ENCODE measurements at regions of chr1 and their contacts with region 1.

Region 1: DNA sequence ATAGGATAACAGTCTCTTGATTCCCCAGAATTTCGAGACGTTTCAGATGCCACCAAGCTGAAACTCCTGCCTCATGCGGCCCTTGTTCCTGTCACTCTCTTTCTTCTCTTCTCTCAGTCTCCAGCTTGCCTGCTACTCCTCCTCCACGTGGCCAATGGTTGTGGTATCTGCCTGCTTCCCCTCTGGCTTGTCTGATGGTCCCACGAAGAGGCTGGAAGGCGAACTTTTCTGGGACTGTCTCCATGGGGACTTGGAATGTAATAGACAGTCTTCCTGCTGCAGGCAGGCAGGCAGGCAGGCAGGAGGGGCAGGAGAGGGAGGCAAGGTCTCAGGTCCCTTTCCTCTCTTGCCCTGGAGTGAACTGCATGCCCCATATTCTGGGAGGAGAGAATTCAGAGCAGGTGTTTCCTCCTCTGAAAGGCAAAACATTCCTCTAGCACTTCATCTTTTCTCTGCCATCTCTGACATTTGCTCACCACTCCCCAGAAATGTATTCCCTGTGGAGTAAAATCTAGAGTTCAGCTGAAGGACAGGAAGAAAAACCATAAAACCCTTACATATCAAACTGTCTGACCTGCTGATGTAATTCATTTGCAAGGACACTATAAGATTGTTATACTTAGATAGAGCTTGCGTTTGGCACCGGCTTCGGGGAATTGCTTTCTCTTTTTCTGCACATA is 64.1 kb upstream of the GNG12 start:
- DNase-seq: peak in 1 of 4 experiments; percentile 34
- ATAC-seq: peak; percentile 71
- H3K4me3 ChIP-seq: no peak overlapping the region
- H3K27ac ChIP-seq: peak overlapping the region; percentile 63
- H3K4me1 ChIP-seq: peaks cover 12 to 35% of the 10 kb centered on the region in 2 experiments
- H3K27me3 ChIP-seq: no peaks in the 10 kb centered on the region
- CTCF ChIP-seq: no peak
- EP300 ChIP-seq: peak; percentile 76; the same call in 1 of the 2 replicates
- POLR2A ChIP-seq: no peak
- RAD21 ChIP-seq: peak in 1 of 2 experiments; percentile 4; a peak in 2 of 4 replicates

Region 2: GRCh38 chr1:67908250-67908936 is 11.0 kb after region 1 on chr1:
- CTCF ChIA-PET with region 1: no interaction called
- POLR2A ChIA-PET with region 1: interaction called, 10 read pairs
- in situ Hi-C with region 1: no loop called
- intact Hi-C with region 1: no loop called
- DNase-seq: no peak
- ATAC-seq: no peak
- H3K4me3 ChIP-seq: no peak overlapping the region
- H3K27ac ChIP-seq: no peak overlapping the region
- H3K4me1 ChIP-seq: peaks cover 0 to under 1% of the 10 kb centered on the region in 2 experiments; a peak in 2 of 5 replicates
- H3K27me3 ChIP-seq: no peaks in the 10 kb centered on the region; a peak in 1 of 5 replicates
- CTCF ChIP-seq: no peak
- EP300 ChIP-seq: no peak
- POLR2A ChIP-seq: no peak
- RAD21 ChIP-seq: no peak